Adrenal gland (tissue), 19 donors: ENCODE measurements at regions of chr4 and their contacts with region 1.

Region 1: DNA sequence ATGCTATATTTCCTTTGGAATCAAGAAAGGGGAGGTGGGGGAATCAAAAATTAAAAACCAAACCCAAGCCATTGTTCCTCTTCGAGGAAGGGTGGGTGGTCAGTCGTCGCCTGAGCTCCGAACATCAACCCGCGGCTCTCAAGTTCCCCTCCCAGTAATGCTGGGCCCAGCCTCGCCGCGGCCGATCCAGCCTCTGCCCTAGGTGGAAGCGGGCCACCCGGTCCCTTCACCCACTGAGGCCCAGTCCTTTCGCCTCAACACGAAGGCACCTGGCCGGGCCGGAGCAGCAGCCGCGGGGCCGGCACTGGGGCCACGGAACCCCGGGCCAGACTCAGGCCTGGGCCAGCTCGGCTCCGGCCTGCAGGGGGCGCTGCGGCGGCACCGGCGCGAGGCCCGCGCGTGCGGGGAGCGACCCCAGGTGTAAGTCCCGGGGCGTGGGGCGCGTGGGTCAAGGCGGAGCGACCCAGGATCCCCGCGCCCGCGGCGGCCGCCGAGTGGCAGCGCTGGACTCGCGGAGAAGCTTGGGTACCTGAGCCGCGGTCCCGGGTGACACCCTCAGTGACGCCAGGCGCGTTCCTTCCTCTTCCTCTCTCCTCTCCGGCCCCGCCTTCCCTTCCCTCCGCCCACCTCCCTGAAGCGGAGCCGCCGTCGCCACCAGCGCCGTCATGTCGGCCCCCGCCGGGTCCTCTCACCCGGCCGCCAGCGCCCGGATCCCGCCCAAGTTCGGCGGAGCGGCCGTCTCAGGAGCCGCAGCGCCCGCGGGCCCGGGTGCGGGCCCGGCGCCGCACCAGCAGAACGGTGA is at the start of gene SEC24B:
- DNase-seq: peak; percentile 87 to 95 (median 89)
- H3K4me3 ChIP-seq: peak within 1 kb of the TSS; percentile 48 to 98 (median 68)
- H3K27ac ChIP-seq: peak within 1 kb of the TSS; percentile 67 to 98 (median 82)
- H3K4me1 ChIP-seq: peaks cover 28 to 48% of the 10 kb centered on the region in 2 donors
- H3K27me3 ChIP-seq: no peaks in the 10 kb centered on the region
- CTCF ChIP-seq: peak in 5 of 6 experiments; percentile 14 to 98 (median 96)
- POLR2A ChIP-seq: peak; percentile 59 to 69
- total RNA-seq, gene SEC24B: 20.6 to 49.3 (median 30.4) TPM

Region 2: GRCh38 chr4:109497511-109497910 is 64.1 kb after region 1 on chr4:
- intact Hi-C with region 1: loop called in 1 of 2 experiments (anchors 10 kb)
- DNase-seq: no peak
- H3K4me3 ChIP-seq: no peak overlapping the region
- H3K27ac ChIP-seq: no peak overlapping the region
- H3K4me1 ChIP-seq: peaks cover 0 to under 1% of the 10 kb centered on the region in 2 donors
- H3K27me3 ChIP-seq: no peaks in the 10 kb centered on the region
- CTCF ChIP-seq: no peak
- POLR2A ChIP-seq: no peak

Region 3: GRCh38 chr4:109559983-109560686 is 126.7 kb after region 1 on chr4 and contains the start of gene MCUB:
- intact Hi-C with region 1: loop called in 1 of 2 experiments (anchors 10 kb)
- DNase-seq: peak; percentile 74 to 90 (median 80)
- H3K4me3 ChIP-seq: peak within 1 kb of the TSS; percentile 5 to 64 (median 36)
- H3K27ac ChIP-seq: peak within 1 kb of the TSS in 4 of 5 donors; percentile 57 to 81 (median 72)
- H3K4me1 ChIP-seq: peaks cover 0 to 7% of the 10 kb centered on the region in 2 donors
- H3K27me3 ChIP-seq: no peaks in the 10 kb centered on the region
- CTCF ChIP-seq: no peak
- POLR2A ChIP-seq: peak; percentile 14 to 41
- total RNA-seq, gene MCUB: 1.2 to 28.5 (median 5.8) TPM